HCT116 (cell line): ENCODE measurements at regions of chr2 and their contacts with region 1.

Region 1: DNA sequence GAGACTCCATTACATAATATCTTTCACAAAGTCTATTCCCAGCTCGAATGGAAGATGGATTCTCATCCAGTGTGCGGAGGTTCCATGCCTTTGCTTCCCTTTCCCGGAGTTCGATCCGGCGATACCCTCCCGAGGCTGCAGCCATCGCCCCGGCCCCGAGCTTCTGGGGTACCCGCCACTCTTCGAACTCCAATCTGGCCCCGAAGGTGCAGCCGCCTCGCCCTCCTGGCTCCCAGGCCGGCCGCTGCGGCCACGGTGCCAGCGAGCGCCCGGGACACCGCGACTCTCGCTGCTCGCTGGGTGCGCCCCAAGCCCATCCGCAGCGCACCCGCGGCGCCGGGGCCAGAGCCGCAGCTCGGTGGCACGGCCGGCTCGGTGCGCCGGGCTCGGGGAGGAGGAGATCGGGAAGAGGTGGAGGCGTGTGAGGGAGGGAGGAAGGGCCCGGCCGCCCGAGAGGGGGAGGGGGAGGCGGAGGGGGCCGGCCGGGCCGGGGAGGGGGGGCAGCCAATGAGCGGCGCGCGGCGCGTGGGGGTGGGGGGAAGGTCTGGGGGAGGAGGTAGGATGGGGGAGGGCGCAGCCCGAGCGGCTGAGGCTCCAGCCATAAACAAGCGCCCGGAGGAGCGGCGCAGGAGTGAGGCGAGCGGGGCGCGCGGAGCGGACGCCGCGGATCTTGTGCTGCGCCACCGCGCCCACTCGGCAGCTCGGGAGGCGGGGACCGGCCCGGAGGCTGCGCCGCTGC is at the start of gene CRIM1:
- DNase-seq: peak; percentile 68
- ATAC-seq: peak; percentile 68
- H3K4me3 ChIP-seq: peak within 1 kb of the TSS; percentile 72 to 83
- H3K27ac ChIP-seq: peak within 1 kb of the TSS; percentile 66; the same call in 1 of the 2 replicates
- H3K4me1 ChIP-seq: peaks cover 20 to 54% of the 10 kb centered on the region in 2 experiments
- H3K27me3 ChIP-seq: no peaks in the 10 kb centered on the region
- CTCF ChIP-seq: no peak
- POLR2A ChIP-seq: peak; percentile 81
- RAD21 ChIP-seq: no peak
- total RNA-seq, gene CRIM1: 27.2 TPM

Region 2: DNA sequence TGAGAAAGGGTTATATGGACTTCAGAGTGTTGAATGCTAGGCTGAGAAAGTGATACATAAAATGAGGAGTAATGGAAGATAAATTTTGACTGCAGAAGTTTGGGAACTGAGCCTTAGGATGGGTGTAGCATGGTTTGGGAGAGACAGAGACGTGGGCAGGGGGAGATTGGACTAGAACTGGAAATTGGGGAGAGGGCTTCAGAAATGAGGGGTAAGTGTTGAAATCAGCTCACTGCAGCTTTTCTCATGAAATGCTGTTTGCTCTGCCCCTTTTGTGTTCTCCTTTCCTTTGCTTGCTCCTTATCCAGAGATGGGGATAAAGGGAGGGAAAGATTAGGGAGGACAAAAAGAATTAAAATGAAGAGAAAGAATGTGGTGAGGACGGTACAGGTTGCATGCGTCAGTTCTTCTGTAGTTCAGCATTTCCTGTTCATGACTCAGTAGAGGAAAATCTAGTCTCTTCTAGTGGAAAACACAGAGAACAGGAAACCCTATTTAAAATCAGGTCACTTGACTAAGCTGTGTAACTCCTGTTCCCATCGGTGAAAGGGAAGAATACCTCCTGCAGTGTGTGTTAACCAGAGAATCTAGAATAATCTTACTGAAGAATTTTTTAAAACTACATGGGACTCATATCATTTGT is 105.8 kb after region 1 on chr2:
- CTCF ChIA-PET with region 1: interaction called, 9 read pairs
- POLR2A ChIA-PET with region 1: interaction called, 4 read pairs
- RAD21 ChIA-PET with region 1: interaction called, 5 read pairs
- intact Hi-C with region 1: loop called (anchors 2 kb)
- DNase-seq: peak; percentile 60
- ATAC-seq: peak; percentile 65
- H3K4me3 ChIP-seq: peak overlapping the region in 1 of 2 experiments; percentile 25; a peak in 2 of 4 replicates
- H3K27ac ChIP-seq: peak overlapping the region; percentile 45
- H3K4me1 ChIP-seq: peaks cover 25 to 35% of the 10 kb centered on the region in 2 experiments
- H3K27me3 ChIP-seq: no peaks in the 10 kb centered on the region
- CTCF ChIP-seq: no peak
- POLR2A ChIP-seq: no peak
- RAD21 ChIP-seq: peak; percentile 7; the same call in 1 of the 2 replicates

Region 3: GRCh38 chr2:36507408-36507812 is 152.1 kb after region 1 on chr2:
- CTCF ChIA-PET with region 1: interaction called, 4 read pairs
- POLR2A ChIA-PET with region 1: no interaction called
- RAD21 ChIA-PET with region 1: no interaction called
- intact Hi-C with region 1: loop called (anchors 1 kb)
- DNase-seq: peak; percentile 27
- ATAC-seq: peak; percentile 100
- H3K4me3 ChIP-seq: no peak overlapping the region
- H3K27ac ChIP-seq: no peak overlapping the region
- H3K4me1 ChIP-seq: peaks cover 0 to 2% of the 10 kb centered on the region in 2 experiments; a peak in 1 of 4 replicates
- H3K27me3 ChIP-seq: no peaks in the 10 kb centered on the region
- CTCF ChIP-seq: peak; percentile 76 to 89 (median 87)
- POLR2A ChIP-seq: no peak
- RAD21 ChIP-seq: peak; percentile 89

Region 4: DNA sequence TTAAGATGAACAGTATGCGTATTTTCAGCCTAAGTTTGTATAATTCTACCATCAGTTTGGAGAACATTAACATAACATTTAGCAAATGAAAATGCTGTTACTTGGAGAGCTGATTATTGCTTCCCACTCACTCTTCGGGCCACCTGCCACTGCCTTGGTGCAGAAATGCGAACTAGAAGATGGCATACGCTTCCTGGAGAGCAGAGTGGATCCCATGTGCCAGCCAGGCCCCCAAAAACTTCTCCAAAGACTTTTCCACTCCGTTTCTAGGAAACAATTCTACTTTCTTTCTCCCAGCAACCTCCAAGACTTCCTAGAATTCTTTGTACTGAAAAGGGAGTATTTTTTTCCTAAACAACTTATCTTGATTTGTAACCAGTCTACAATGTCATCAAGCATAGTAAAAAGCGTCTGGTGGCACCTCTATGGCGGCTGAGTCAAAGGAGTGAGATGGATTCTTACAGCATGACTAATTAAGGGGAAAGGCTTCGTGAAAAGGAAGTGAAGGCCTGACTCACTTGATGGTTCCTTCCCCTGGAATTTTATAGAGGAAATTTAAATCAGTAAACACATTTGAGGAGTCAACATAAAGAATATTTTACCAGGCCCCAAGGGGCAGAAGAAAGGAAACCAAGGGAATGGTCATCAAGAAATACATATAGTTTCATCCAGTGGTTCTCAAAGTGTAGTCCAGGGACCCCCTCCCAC is 206.1 kb after region 1 on chr2:
- CTCF ChIA-PET with region 1: no interaction called
- POLR2A ChIA-PET with region 1: no interaction called
- RAD21 ChIA-PET with region 1: no interaction called
- intact Hi-C with region 1: loop called (anchors 10 kb)
- DNase-seq: peak; percentile 88
- ATAC-seq: peak; percentile 89
- H3K4me3 ChIP-seq: peak overlapping the region in 1 of 2 experiments; percentile 47; a peak in 2 of 4 replicates
- H3K27ac ChIP-seq: peak overlapping the region; percentile 79
- H3K4me1 ChIP-seq: peaks cover 39 to 68% of the 10 kb centered on the region in 2 experiments
- H3K27me3 ChIP-seq: no peaks in the 10 kb centered on the region
- CTCF ChIP-seq: no peak
- POLR2A ChIP-seq: no peak
- RAD21 ChIP-seq: no peak

Region 5: DNA sequence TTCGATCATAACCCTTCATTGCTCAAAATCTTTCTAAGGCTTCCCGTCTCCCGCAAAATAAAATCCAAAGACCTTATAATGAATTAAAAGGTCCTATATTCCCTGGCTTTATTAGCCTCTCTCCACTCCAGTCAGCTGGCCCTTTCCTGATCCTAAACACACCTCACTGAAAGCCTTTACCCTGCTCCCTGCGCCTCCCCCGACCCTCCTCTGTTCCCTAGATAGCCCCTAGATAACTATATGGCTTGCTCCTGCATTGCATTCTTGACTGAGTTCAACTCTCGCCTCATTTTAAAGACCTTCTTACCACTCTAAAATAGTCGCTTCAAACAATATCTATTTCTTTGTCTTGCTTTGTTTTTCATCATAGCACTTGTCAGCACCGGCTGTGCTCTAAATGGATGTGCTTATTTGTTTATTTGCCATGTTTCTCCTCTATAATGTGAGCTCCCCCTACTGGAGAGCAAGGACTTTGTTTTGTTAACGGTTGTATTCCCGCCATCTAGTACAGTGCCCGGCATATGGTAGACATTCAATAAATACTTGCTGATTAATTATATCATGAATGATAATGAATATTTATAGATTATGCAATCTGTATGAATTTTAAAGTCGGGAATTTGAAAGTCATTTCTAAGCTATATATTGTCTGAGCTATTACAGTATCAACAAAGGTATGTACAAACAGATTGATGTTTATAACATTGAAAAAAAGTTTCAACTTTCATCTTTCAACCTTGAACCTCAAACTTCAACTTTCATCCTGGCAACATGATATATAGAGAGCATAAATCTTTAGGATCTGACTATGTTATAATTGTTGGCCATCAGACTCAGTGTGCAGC is 308.8 kb after region 1 on chr2:
- CTCF ChIA-PET with region 1: interaction called, 8 read pairs
- POLR2A ChIA-PET with region 1: interaction called, 3 read pairs
- RAD21 ChIA-PET with region 1: interaction called in 1 of 2 experiments, 3 read pairs
- intact Hi-C with region 1: loop called (anchors 1 kb)
- DNase-seq: peak; percentile 64
- ATAC-seq: peak; percentile 97
- H3K4me3 ChIP-seq: no peak overlapping the region
- H3K27ac ChIP-seq: no peak overlapping the region
- H3K4me1 ChIP-seq: peaks cover 0 to 11% of the 10 kb centered on the region in 2 experiments; a peak in 1 of 4 replicates
- H3K27me3 ChIP-seq: no peaks in the 10 kb centered on the region
- CTCF ChIP-seq: peak; percentile 79 to 92 (median 85)
- POLR2A ChIP-seq: no peak
- RAD21 ChIP-seq: peak; percentile 94

Region 6: DNA sequence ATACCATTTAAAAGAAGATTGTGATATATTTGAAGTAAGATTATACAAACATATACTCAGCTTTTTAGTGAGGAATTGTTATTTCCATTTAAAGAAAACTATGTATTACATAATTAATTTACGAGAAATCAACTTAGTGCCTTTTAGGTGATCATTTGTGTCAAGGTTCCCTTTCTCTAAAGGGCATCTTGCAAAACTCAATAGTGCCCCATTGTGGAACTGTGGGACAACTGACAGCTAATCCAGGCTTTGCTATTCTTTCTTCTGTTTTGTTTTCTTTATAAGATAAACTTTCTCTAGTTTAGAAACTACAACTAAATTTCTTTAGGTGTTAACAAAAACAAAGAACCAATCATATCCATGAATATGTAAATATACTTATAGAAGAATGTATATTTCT is 316.9 kb after region 1 on chr2:
- CTCF ChIA-PET with region 1: interaction called, 11 read pairs
- POLR2A ChIA-PET with region 1: interaction called, 3 read pairs
- RAD21 ChIA-PET with region 1: no interaction called
- intact Hi-C with region 1: no loop called
- DNase-seq: peak; percentile 32
- ATAC-seq: peak; percentile 74
- H3K4me3 ChIP-seq: no peak overlapping the region
- H3K27ac ChIP-seq: no peak overlapping the region
- H3K4me1 ChIP-seq: no peaks in the 10 kb centered on the region
- H3K27me3 ChIP-seq: no peaks in the 10 kb centered on the region
- CTCF ChIP-seq: peak; percentile 41 to 68 (median 65); a peak in 4 of 6 replicates
- POLR2A ChIP-seq: no peak
- RAD21 ChIP-seq: peak; percentile 72

Region 7: GRCh38 chr2:36770542-36771287 is 415.4 kb after region 1 on chr2:
- CTCF ChIA-PET with region 1: interaction called, 6 read pairs
- POLR2A ChIA-PET with region 1: no interaction called
- RAD21 ChIA-PET with region 1: no interaction called
- intact Hi-C with region 1: loop called (anchors 2 kb)
- DNase-seq: peak; percentile 51
- ATAC-seq: peak; percentile 98
- H3K4me3 ChIP-seq: no peak overlapping the region
- H3K27ac ChIP-seq: no peak overlapping the region
- H3K4me1 ChIP-seq: no peaks in the 10 kb centered on the region
- H3K27me3 ChIP-seq: no peaks in the 10 kb centered on the region
- CTCF ChIP-seq: peak; percentile 93 to 95 (median 95)
- POLR2A ChIP-seq: no peak
- RAD21 ChIP-seq: peak; percentile 73